ENCODE measurements at regions of chr6 and their contacts with region 1.

Region 1: GRCh38 chr6:26196846-26197648 is 109.8 kb downstream of the HFE start:
- DNase-seq: peak; percentile 86
- ATAC-seq: peak; percentile 43
- H3K4me3 Mint-ChIP-seq: peak overlapping the region; percentile 98
- H3K27ac Mint-ChIP-seq: peak overlapping the region; percentile 99
- H3K4me1 Mint-ChIP-seq: peaks cover 28% of the 10 kb centered on the region
- H3K27me3 Mint-ChIP-seq: no peaks in the 10 kb centered on the region

Region 2: GRCh38 chr6:25942561-25943147 is 254.4 kb before region 1 on chr6:
- CTCF ChIA-PET with region 1: no interaction called
- POLR2A ChIA-PET with region 1: no interaction called
- intact Hi-C with region 1: no loop called
- DNase-seq: no peak
- ATAC-seq: peak; percentile 70
- H3K4me3 Mint-ChIP-seq: no peak overlapping the region
- H3K27ac Mint-ChIP-seq: no peak overlapping the region
- H3K4me1 Mint-ChIP-seq: peaks cover 22% of the 10 kb centered on the region
- H3K27me3 Mint-ChIP-seq: peaks cover 4% of the 10 kb centered on the region

Region 3: DNA sequence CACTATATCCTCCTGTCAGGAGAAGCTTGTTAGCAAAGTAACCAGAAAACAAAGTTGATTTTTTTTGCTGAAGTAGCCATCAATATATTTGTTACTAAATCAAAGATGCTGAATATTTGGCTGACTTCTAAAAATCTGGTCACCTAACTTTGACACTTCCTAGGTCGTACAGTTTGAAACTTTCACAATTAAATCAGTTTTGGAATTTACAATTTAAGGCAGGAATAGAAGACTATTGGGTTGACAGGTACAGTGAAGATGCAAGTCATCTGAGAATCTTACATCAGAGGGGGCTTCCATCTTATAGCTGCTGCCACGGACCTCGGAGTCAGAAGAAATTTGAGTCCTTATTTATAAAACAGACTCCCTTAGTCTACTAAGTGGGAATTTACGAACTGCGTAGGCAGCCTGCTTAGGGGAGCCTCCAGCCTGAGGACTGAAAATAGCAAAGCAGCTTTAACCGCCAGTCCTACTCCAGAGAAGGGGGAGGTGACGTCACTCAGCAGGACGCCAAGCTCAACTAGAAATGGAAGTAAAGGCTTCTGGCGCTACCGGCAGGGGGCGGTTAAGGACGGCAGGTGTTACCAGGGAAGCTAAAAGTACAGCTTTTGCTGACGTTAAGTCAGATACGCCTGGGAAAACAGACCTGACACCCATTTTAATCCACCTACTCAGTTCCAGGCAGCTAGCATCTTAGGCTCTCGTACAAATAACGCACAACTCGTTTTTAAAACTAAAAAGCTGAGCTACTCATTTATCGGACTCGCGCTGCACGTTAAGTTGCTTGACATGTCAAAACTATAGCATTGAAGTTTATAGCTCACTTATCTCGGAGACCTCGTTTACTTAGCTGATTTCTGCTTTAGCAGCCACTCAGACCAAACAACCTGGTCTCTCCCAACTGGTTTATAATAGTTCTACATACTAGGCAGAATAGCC is 170.9 kb before region 1 on chr6:
- CTCF ChIA-PET with region 1: interaction called, 6 read pairs
- POLR2A ChIA-PET with region 1: interaction called, 10 read pairs
- intact Hi-C with region 1: loop called in 1 of 2 experiments (anchors 2 kb)
- DNase-seq: peak; percentile 96
- ATAC-seq: peak; percentile 39
- H3K4me3 Mint-ChIP-seq: peak overlapping the region; percentile 81
- H3K27ac Mint-ChIP-seq: peak overlapping the region; percentile 98
- H3K4me1 Mint-ChIP-seq: peaks cover 51% of the 10 kb centered on the region
- H3K27me3 Mint-ChIP-seq: no peaks in the 10 kb centered on the region

Region 4: DNA sequence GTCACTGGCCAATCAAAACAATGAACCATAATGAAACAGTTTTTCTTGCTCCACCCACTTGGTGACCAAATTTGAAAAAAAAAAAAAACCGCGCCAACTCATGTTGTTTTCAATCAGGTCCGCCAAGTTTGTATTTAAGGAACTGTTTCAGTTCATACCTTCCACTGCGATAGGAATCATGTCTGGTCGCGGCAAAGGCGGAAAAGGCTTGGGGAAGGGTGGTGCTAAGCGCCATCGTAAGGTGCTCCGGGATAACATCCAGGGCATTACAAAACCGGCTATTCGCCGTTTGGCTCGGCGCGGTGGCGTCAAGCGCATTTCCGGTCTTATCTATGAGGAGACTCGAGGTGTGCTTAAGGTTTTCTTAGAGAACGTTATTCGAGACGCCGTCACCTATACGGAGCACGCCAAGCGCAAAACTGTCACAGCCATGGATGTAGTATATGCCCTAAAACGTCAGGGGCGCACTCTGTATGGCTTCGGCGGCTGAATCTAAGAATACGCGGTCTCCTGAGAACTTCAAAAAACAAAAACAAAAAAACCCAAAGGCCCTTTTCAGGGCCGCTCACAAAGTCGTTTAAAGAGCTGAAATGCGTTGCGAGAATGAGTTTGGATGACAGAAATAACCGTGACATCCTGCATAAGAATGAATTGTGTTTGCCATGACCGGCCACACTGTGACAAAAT is 93.1 kb before region 1 on chr6:
- CTCF ChIA-PET with region 1: no interaction called
- POLR2A ChIA-PET with region 1: interaction called, 10 read pairs
- intact Hi-C with region 1: no loop called
- DNase-seq: peak; percentile 92
- ATAC-seq: peak; percentile 89
- H3K4me3 Mint-ChIP-seq: peak overlapping the region; percentile 82
- H3K27ac Mint-ChIP-seq: peak overlapping the region; percentile 97
- H3K4me1 Mint-ChIP-seq: peaks cover 16% of the 10 kb centered on the region
- H3K27me3 Mint-ChIP-seq: no peaks in the 10 kb centered on the region

Region 5: GRCh38 chr6:26183581-26184366 is 13.3 kb before region 1 on chr6:
- CTCF ChIA-PET with region 1: interaction called, 16 read pairs
- POLR2A ChIA-PET with region 1: interaction called, 126 read pairs
- intact Hi-C with region 1: no loop called
- DNase-seq: peak; percentile 82
- ATAC-seq: peak; percentile 80
- H3K4me3 Mint-ChIP-seq: peak overlapping the region; percentile 89
- H3K27ac Mint-ChIP-seq: peak overlapping the region; percentile 92
- H3K4me1 Mint-ChIP-seq: peaks cover 45% of the 10 kb centered on the region
- H3K27me3 Mint-ChIP-seq: no peaks in the 10 kb centered on the region

Region 6: GRCh38 chr6:26240154-26241032 is 43.3 kb after region 1 on chr6:
- CTCF ChIA-PET with region 1: interaction called, 4 read pairs
- POLR2A ChIA-PET with region 1: interaction called, 131 read pairs
- intact Hi-C with region 1: loop called in 1 of 2 experiments (anchors 1 kb)
- DNase-seq: peak; percentile 85
- ATAC-seq: peak; percentile 83
- H3K4me3 Mint-ChIP-seq: peak overlapping the region; percentile 83
- H3K27ac Mint-ChIP-seq: peak overlapping the region; percentile 98
- H3K4me1 Mint-ChIP-seq: peaks cover 26% of the 10 kb centered on the region
- H3K27me3 Mint-ChIP-seq: no peaks in the 10 kb centered on the region

Region 7: DNA sequence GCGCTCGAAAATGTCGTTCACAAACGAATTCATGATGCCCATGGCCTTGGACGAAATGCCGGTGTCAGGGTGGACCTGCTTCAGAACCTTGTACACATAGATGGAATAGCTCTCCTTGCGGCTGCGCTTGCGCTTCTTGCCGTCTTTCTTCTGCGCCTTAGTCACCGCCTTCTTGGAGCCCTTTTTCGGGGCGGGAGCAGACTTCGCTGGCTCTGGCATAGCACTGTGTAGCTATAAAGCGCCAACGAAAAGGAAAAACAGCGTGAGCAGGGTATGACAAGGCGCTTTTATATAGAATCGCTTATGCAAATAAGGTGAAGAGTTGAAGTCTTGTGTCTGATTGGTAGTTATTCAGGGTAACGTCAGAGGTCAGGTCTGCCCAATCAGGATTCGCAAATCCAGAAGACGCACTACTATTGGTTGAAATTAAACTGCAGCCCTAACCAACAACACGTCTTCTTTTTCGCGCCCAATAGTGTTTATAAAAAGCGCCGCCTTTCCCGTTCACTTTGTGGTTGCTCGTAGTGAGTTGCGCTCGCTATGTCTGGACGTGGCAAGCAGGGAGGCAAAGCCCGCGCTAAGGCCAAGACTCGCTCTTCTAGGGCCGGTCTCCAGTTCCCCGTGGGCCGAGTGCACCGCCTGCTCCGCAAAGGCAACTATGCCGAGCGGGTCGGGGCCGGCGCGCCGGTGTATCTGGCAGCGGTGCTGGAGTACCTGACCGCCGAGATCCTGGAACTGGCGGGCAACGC is 935.7 kb after region 1 on chr6:
- CTCF ChIA-PET with region 1: no interaction called
- POLR2A ChIA-PET with region 1: interaction called, 37 read pairs
- intact Hi-C with region 1: loop called in 1 of 2 experiments (anchors 2 kb)
- DNase-seq: peak; percentile 93
- ATAC-seq: peak; percentile 80
- H3K4me3 Mint-ChIP-seq: no peak overlapping the region
- H3K27ac Mint-ChIP-seq: no peak overlapping the region
- H3K4me1 Mint-ChIP-seq: peaks cover 21% of the 10 kb centered on the region
- H3K27me3 Mint-ChIP-seq: no peaks in the 10 kb centered on the region

Region 8: DNA sequence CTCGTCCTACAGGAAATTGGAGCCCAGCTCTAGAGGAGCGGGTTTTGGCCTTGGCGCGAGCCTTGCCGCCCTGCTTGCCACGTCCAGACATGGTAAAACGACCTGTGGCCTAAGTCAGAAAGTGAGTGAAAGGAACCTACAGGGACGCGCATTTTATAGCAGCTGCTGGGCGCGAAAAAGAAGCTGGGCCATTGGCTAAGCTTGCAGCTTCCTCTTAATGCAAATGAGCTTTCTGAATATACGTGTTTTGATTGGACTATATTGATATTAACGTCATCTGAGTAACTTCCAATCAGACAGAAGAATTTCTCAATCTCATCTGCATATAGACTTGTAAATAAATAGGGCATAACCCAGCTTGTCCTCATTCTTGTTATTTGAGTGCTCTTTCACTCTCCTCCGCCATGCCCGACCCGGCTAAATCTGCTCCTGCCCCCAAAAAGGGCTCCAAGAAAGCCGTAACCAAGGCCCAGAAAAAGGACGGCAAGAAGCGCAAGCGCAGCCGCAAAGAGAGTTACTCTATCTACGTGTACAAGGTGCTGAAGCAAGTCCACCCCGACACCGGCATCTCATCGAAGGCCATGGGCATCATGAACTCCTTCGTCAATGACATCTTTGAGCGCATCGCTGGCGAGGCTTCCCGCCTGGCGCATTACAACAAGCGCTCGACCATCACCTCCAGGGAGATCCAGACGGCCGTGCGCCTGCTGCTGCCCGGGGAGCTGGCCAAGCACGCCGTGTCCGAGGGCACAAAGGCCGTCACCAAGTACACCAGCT is 1696.2 kb after region 1 on chr6:
- CTCF ChIA-PET with region 1: no interaction called
- POLR2A ChIA-PET with region 1: interaction called, 12 read pairs
- intact Hi-C with region 1: loop called (anchors 5 kb)
- DNase-seq: peak; percentile 94
- ATAC-seq: peak; percentile 64
- H3K4me3 Mint-ChIP-seq: no peak overlapping the region
- H3K27ac Mint-ChIP-seq: no peak overlapping the region
- H3K4me1 Mint-ChIP-seq: peaks cover 31% of the 10 kb centered on the region
- H3K27me3 Mint-ChIP-seq: no peaks in the 10 kb centered on the region